Dorsolateral prefrontal cortex (tissue), 120 donors: ENCODE measurements at regions of chr12 and their contacts with region 1.

Region 1: DNA sequence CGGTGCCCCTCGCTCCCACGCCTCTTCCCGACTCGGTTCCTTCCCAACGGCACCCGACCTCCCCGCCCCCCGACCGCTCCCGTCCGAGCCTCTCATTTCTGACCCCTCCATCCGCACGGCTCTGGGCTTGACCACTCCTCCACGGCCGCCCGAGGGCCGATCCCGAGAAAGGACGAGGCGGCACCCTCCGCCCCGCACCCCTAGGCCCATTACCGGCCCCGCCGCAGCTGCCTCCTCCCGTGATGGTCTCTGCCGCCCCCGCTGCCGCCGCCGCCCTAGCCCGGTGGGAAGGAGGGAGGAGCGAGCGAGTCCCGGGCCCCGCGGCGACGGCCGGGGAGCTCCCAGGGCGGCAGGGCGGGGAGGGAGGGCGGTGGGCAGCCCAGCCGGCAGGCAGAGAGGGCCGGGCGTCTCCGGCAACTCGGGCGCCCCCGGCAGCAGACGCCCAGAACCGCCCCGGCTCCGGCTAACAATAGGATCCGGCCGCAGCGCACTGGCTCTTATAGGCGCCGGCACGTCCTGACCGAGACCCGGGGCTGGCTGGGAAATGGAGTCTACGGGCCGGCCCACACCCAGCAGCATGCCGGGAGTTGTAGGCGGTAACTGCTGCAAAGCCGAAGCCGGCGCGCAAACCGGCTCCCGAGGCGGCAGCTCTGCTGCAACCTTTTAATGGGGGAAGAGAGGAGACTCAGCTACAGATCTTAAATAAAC is at the start of gene CSRNP2:
- DNase-seq: peak; percentile 96 to 99 (median 98)
- H3K4me3 ChIP-seq: peak within 1 kb of the TSS; percentile 64 to 96 (median 88)
- H3K27ac ChIP-seq: peak within 1 kb of the TSS; percentile 34 to 98 (median 91)
- H3K27me3 ChIP-seq: no peaks in the 10 kb centered on the region
- CTCF ChIP-seq: peak in 43 of 56 donors; percentile 6 to 60 (median 34)
- total RNA-seq, gene CSRNP2: 42.6 to 96.4 (median 71.8) TPM

Region 2: DNA sequence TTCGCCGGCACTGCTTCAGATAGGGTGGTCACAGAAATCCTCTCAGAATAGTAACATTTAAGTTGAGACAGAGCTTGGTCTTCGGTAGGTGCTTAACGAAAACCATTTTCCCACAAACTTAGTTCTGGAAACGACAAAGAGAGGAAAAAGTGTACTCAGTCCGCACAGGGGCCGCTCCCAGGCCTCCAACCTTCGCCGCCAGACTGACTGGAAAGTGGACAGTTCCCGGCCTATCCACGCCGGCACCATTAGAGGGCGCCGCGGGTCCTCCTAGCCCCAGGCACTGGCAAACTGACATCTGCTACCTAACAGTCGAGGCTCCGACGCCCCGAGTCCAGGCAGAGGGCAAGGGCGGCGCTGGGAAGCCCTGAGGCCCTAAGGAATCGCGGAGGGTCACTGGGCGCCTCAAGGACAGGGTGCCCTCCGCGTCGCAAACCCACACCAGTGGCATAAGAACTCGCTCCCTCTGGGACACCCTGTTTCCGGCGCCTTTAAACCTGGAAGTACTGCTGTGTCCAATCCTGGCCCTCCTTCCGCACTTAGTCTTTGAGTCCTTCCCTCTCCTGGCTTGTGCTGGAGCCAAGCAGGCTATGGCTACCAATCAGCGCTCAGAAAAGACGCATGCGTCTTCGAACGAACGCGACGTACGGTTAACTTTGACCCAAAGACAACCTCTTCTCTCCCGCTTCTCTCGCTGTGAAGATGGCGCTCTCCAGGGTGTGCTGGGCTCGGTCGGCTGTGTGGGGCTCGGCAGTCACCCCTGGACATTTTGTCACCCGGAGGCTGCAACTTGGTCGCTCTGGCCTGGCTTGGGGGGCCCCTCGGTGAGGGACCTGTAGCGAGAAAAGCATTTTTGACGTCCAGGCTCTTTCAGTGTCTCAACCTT is 35.4 kb before region 1 on chr12 and contains the start of gene LETMD1:
- intact Hi-C with region 1: loop called (anchors 2 kb)
- DNase-seq: peak; percentile 85 to 98 (median 96)
- H3K4me3 ChIP-seq: peak within 1 kb of the TSS; percentile 55 to 100 (median 83)
- H3K27ac ChIP-seq: peak within 1 kb of the TSS; percentile 57 to 100 (median 96)
- H3K27me3 ChIP-seq: no peaks in the 10 kb centered on the region
- CTCF ChIP-seq: peak; percentile 49 to 97 (median 90)
- total RNA-seq, gene LETMD1: 43.1 to 97.4 (median 70.1) TPM

Region 3: GRCh38 chr12:51172515-51173431 is 89.5 kb after region 1 on chr12 and contains the start of gene TFCP2:
- intact Hi-C with region 1: loop called in 1 of 2 experiments (anchors 10 kb)
- DNase-seq: peak; percentile 93 to 98 (median 97)
- H3K4me3 ChIP-seq: peak within 1 kb of the TSS; percentile 67 to 99 (median 88)
- H3K27ac ChIP-seq: peak within 1 kb of the TSS; percentile 76 to 100 (median 96)
- H3K27me3 ChIP-seq: no peaks in the 10 kb centered on the region
- CTCF ChIP-seq: peak in 14 of 56 donors; percentile 5 to 30 (median 12)
- total RNA-seq, gene TFCP2: 24.3 to 46.0 (median 36.2) TPM

Region 4: DNA sequence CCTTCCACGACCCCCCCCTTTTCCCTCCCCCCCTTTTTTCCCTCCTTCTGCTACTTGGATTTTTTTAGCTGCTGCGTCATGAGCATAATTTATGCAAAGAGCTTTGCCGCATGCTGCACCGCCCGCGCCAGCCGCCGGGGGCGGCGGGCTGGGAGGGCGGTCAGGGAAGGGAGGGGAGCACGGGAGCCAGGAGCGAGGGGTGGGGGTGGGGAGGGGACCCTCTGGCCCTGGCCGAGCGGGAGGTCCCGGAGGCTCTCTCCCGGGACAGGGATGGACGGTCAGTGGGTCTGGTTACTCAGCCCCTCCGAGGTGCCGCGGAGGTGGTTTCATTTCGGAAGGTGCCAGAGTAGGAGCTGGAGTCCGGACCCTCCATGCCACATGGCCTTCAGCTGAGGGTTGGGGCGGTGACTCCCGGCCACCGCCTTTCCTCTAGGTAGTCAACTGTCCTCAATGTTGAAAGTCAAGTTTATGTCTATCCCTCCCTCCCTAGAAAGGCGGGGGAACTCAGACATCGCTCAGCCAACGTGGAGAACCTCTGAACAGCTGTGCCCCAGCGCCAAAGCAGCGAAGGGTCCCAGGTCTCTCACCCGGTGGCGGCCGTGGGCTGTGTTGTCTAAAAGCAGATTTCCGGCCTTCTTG is 134.8 kb after region 1 on chr12 and contains the start of gene POU6F1:
- intact Hi-C with region 1: loop called (anchors 5 kb)
- DNase-seq: peak in 8 of 10 donors; percentile 35 to 79 (median 60)
- H3K4me3 ChIP-seq: peak within 1 kb of the TSS; percentile 56 to 96 (median 86)
- H3K27ac ChIP-seq: peak within 1 kb of the TSS; percentile 91 to 100 (median 98)
- H3K27me3 ChIP-seq: no peaks in the 10 kb centered on the region
- CTCF ChIP-seq: peak in 50 of 56 donors; percentile 13 to 63 (median 44)
- total RNA-seq, gene POU6F1: 55.9 to 145 (median 76.9) TPM

Region 5: DNA sequence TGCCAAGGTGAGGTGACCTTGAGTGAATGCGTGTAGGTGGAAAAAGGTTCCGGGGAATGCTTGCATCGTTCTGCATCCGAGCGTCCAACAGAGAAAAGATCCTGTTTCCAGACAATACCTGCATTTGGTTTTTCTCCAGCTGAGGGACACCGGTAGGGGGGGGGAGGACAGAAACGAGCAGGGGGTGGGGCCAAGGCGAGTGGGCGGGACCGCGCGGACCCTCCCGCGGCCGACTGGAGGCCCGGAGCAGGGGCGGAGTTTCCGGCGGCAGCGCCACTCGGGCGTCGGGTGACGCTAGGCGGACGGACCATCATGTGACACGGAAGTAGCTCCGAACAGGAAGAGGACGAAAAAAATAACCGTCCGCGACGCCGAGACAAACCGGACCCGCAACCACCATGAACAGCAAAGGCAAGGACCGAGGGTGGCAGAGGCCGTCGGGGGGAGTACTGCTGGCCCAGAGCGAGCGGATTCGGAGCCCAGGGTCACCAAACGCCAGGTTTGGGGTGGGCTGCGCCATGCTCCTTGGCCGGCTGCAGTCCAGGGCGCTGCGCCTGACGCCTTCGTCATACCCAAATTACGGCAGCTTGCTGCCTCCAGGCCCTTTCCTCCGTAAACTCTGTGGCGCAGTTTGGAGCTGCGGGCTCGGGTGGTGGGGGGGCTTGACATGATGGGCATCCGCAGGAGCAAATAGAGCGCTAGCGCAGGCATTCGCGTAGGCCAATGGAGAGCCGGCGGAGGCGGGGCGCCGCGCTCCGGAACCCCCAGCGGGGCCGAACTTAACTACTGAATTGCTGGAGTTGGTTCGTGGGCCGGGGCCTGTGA is 155.4 kb after region 1 on chr12 and contains the start of gene DAZAP2:
- intact Hi-C with region 1: loop called in 1 of 2 experiments (anchors 2 kb)
- DNase-seq: peak; percentile 89 to 98 (median 96)
- H3K4me3 ChIP-seq: peak within 1 kb of the TSS; percentile 75 to 100 (median 100)
- H3K27ac ChIP-seq: peak within 1 kb of the TSS; percentile 97 to 100 (median 100)
- H3K27me3 ChIP-seq: no peaks in the 10 kb centered on the region
- CTCF ChIP-seq: peak in 41 of 56 donors; percentile 9 to 62 (median 38)
- total RNA-seq, gene DAZAP2: 91.8 to 231 (median 151) TPM